ENCODE measurements at regions of chr9 and their contacts with region 1.

Region 1: GRCh38 chr9:89743573-89744361 is 139.0 kb downstream of the GADD45G start:
- DNase-seq: peak; percentile 65
- ATAC-seq: peak; percentile 68
- H3K4me3 Mint-ChIP-seq: peak overlapping the region; percentile 3
- H3K27ac Mint-ChIP-seq: peak overlapping the region; percentile 16
- H3K4me1 Mint-ChIP-seq: peaks cover 77% of the 10 kb centered on the region
- H3K27me3 Mint-ChIP-seq: no peaks in the 10 kb centered on the region

Region 2: DNA sequence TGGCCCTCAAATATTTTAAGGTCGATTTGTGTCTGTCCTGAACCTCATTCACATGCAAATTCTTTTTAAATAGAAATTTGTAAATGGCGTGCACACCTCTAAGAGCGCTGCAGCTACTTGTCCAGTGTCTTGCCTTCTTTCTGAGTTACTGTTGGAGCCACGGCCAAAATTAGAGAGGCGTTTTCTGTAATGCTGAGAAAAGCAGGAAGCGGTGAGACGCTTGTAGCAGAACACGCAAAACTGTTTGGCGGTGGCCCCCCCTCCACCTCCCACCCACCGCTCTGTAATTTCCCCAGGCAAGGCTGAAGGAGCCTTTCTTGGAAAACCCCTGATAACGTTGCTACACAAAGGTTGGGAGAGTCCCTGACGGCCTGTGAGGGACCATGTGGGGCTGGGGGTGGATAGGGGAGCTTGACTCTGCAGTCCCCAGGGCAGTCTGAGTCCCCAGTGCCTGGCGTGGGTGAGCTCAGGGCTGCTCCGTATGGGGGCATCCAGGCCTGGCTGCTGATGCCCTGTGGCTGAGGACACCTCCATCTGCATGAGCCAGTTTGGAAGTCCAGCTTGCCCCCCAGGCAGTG is 42.5 kb before region 1 on chr9:
- CTCF ChIA-PET with region 1: no interaction called
- POLR2A ChIA-PET with region 1: no interaction called
- intact Hi-C with region 1: loop called in 1 of 2 experiments (anchors 2 kb)
- DNase-seq: peak; percentile 86
- ATAC-seq: peak; percentile 97
- H3K4me3 Mint-ChIP-seq: peak overlapping the region; percentile 65
- H3K27ac Mint-ChIP-seq: peak overlapping the region; percentile 85
- H3K4me1 Mint-ChIP-seq: peaks cover 27% of the 10 kb centered on the region
- H3K27me3 Mint-ChIP-seq: no peaks in the 10 kb centered on the region

Region 3: DNA sequence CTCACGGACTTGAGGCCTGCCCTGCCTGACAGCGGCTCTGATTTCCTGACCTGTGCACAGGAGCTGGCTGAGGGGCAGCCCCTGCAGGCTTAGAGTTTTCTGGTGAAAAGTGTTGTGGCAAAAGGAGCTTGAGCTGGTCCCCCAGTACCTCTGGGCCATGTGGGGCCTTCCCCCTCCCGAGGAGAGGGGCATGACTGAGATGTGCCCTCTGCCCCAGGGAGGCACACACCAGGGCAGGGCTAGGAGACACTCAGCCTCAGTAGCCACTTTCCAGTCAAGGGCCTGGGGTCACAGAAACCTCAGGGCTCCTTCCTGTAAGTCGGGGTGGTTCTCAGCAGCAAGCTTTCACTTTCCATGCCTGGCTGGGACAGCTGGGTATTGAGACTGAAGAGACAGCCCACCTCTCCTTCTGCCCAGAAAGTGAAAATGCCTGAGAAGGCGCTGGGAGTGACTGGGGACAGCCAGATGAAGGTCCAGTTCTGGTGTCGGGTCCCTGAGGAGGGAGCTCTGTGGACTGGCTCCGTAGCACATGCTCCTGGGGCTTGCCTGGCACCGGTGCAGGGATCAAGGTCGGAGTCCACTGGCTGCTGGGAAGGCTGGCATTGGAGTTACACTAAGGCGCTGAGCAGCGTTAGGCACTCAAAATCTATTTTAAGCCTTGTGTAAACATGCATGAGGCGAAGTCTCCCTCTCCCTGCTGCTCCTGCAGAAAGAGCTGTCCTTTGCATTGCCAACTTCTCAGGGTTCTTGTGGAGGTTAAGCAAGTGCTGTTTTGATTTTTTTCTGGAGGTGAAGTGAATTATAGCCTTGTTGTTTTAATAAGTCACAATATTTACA is 256.0 kb after region 1 on chr9:
- CTCF ChIA-PET with region 1: no interaction called
- POLR2A ChIA-PET with region 1: no interaction called
- intact Hi-C with region 1: loop called in 1 of 2 experiments (anchors 5 kb)
- DNase-seq: peak; percentile 84
- ATAC-seq: peak; percentile 91
- H3K4me3 Mint-ChIP-seq: peak overlapping the region; percentile 42
- H3K27ac Mint-ChIP-seq: peak overlapping the region; percentile 86
- H3K4me1 Mint-ChIP-seq: peaks cover 25% of the 10 kb centered on the region
- H3K27me3 Mint-ChIP-seq: no peaks in the 10 kb centered on the region

Measured in activated CD4-positive, alpha-beta T cell treated with anti-CD3 and anti-CD28 coated beads for 36 hours (primary cell).